GM12878 (cell line): ENCODE measurements at regions of chr12 and their contacts with region 1.

Region 1: GRCh38 chr12:24937553-24938244 is 11.2 kb downstream of the BCAT1 start:
- DNase-seq: no peak
- ATAC-seq: peak; percentile 19
- H3K4me3 ChIP-seq: no peak overlapping the region
- H3K27ac ChIP-seq: no peak overlapping the region
- H3K4me1 ChIP-seq: peaks cover 9% of the 10 kb centered on the region
- H3K27me3 ChIP-seq: no peaks in the 10 kb centered on the region
- CTCF ChIP-seq: no peak
- EP300 ChIP-seq: no peak
- POLR2A ChIP-seq: no peak
- RAD21 ChIP-seq: no peak

Region 2: GRCh38 chr12:24922090-24922489 is 15.6 kb before region 1 on chr12:
- CTCF ChIA-PET with region 1: no interaction called
- POLR2A ChIA-PET with region 1: no interaction called
- RAD21 ChIA-PET with region 1: interaction called, 5 read pairs
- SMC1A ChIA-PET with region 1: interaction called, 12 read pairs
- in situ Hi-C with region 1: no loop called
- intact Hi-C with region 1: no loop called
- DNase-seq: no peak
- ATAC-seq: peak; percentile 78
- H3K4me3 ChIP-seq: no peak overlapping the region
- H3K27ac ChIP-seq: no peak overlapping the region
- H3K4me1 ChIP-seq: no peaks in the 10 kb centered on the region
- H3K27me3 ChIP-seq: no peaks in the 10 kb centered on the region
- CTCF ChIP-seq: no peak
- EP300 ChIP-seq: no peak
- POLR2A ChIP-seq: no peak
- RAD21 ChIP-seq: no peak